ENCODE measurements at regions of chr20 and their contacts with region 1.

Region 1: DNA sequence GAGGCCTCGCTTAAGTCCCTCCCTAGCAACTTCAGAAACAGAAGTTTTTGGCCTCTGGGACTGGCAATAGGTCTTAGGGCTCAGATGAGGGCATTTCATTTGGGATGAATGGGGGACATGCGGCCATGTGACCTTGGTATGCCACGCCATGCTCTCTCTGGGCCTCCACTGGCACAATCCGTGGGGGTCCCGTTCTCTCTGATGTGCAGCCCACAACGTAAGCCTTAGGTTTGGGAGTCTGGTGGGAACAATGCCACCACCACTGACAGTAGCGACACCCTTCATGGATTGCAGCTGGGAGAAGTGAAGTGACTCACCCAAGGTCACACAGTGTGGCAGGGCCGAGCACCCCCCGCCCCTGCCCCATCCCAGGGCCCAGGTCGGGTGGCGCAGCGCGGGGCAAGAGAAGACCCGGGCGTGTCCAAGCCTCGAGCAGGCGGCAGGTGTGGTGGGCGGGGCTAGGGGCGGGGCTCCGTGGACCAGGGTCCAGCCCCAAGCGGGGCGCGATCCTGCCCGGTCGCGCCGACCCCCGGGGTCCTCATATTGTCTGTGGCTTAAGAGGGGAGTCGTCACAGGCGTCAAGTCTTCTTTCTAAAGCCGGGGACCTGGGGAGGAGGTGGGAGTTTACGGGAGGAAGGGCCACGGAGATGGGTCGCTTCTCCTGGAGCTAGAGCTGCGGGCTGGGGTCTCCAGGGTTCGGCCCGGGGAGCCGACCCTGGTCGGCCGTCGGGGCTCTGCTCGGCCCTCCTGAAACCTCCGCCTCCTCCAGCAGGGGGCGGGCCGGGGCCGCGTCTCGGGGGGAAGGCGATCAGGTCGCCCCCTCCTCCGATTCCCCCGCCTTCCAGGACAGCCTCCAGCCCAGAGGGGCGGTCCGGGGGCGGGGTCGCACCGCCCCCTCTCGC is 698 bp upstream of the CEBPB start:
- DNase-seq: peak; percentile 90
- H3K4me3 Mint-ChIP-seq: peak overlapping the region; percentile 29
- H3K27ac Mint-ChIP-seq: no peak overlapping the region
- H3K4me1 Mint-ChIP-seq: peaks cover 15% of the 10 kb centered on the region
- H3K27me3 Mint-ChIP-seq: peaks cover 9% of the 10 kb centered on the region

Region 2: GRCh38 chr20:50153485-50154377 is 36.2 kb before region 1 on chr20 and contains the start of gene PEDS1:
- CTCF ChIA-PET with region 1: no interaction called
- intact Hi-C with region 1: no loop called
- DNase-seq: peak; percentile 87
- H3K4me3 Mint-ChIP-seq: peak within 1 kb of the TSS; percentile 75
- H3K27ac Mint-ChIP-seq: peak within 1 kb of the TSS; percentile 84
- H3K4me1 Mint-ChIP-seq: peaks cover 39% of the 10 kb centered on the region
- H3K27me3 Mint-ChIP-seq: no peaks in the 10 kb centered on the region
- total RNA-seq, gene PEDS1: 10.4 to 11.2 TPM

Region 3: DNA sequence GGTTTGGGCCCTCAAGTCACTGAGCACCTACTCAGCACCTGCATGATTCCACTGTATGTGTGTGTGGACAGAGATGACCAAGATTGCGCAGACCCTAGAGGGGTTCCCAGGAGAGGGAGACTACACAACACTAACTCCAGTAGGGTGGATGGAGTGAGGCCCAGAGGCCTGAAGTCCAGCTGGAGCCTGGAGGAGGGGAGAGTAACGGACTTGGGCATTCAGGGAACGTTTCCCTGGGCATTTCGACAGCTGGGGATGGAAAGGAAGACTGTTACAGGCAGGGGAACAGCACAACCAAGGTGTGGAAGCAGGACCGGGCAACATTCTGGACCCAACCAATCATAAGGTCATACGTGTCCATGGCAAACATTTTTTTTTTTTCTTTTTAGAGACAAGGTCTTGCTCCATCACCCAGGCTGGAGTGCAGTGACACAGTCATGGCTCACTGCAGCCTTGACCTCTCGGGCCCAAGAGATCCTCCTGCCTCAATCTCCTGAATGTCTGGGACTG is 10.4 kb before region 1 on chr20:
- CTCF ChIA-PET with region 1: interaction called, 15 read pairs
- intact Hi-C with region 1: no loop called
- DNase-seq: no peak
- H3K4me3 Mint-ChIP-seq: no peak overlapping the region
- H3K27ac Mint-ChIP-seq: no peak overlapping the region
- H3K4me1 Mint-ChIP-seq: no peaks in the 10 kb centered on the region
- H3K27me3 Mint-ChIP-seq: peaks cover 9% of the 10 kb centered on the region

Region 4: GRCh38 chr20:50338479-50339391 is 148.8 kb after region 1 on chr20:
- CTCF ChIA-PET with region 1: interaction called, 3 read pairs
- intact Hi-C with region 1: loop called (anchors 1 kb)
- DNase-seq: peak; percentile 88
- H3K4me3 Mint-ChIP-seq: peak overlapping the region; percentile 53
- H3K27ac Mint-ChIP-seq: peak overlapping the region; percentile 92
- H3K4me1 Mint-ChIP-seq: peaks cover 36% of the 10 kb centered on the region
- H3K27me3 Mint-ChIP-seq: no peaks in the 10 kb centered on the region

Region 5: DNA sequence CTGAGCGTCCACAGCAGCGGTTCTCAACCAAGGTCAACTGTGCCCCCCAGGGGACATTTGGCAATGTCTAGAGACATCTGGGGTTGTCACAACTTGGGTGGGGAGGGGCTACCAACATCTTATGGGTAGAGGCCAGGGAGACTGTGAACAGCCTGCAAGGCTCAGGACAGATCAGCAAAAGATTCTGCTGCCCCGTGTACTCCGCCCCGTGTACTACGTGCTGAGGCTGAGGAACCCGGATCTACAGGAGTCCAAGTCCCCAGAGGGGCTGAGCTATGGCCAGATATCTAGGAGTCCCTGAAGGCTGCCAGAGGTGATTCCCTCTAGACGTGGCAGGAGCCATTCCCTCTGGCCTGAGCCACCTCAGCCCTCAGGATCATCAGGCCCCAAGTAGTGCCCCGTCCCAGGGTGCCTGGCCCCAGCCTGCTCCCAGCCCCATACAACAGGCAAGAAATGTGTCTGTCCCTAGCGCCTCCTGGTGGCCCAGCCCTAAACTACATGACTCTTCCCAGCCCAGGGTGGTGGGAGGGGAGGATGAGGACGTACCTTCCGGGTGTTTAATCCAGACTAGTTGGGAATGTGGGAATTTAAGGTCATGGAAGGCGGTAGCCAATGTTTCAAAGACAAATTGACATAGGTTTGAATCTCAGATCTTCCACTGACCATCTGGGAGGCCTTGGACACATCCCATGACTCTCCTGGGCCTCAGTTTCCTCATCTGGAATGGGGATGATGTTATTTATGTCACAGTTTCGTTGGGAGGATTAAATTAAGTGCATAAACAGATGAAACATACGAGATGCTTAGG is 270.7 kb after region 1 on chr20:
- CTCF ChIA-PET with region 1: interaction called, 171 read pairs
- intact Hi-C with region 1: loop called (anchors 1 kb)
- DNase-seq: peak; percentile 90
- H3K4me3 Mint-ChIP-seq: no peak overlapping the region
- H3K27ac Mint-ChIP-seq: no peak overlapping the region
- H3K4me1 Mint-ChIP-seq: peaks cover 9% of the 10 kb centered on the region
- H3K27me3 Mint-ChIP-seq: peaks cover 4% of the 10 kb centered on the region

Region 6: DNA sequence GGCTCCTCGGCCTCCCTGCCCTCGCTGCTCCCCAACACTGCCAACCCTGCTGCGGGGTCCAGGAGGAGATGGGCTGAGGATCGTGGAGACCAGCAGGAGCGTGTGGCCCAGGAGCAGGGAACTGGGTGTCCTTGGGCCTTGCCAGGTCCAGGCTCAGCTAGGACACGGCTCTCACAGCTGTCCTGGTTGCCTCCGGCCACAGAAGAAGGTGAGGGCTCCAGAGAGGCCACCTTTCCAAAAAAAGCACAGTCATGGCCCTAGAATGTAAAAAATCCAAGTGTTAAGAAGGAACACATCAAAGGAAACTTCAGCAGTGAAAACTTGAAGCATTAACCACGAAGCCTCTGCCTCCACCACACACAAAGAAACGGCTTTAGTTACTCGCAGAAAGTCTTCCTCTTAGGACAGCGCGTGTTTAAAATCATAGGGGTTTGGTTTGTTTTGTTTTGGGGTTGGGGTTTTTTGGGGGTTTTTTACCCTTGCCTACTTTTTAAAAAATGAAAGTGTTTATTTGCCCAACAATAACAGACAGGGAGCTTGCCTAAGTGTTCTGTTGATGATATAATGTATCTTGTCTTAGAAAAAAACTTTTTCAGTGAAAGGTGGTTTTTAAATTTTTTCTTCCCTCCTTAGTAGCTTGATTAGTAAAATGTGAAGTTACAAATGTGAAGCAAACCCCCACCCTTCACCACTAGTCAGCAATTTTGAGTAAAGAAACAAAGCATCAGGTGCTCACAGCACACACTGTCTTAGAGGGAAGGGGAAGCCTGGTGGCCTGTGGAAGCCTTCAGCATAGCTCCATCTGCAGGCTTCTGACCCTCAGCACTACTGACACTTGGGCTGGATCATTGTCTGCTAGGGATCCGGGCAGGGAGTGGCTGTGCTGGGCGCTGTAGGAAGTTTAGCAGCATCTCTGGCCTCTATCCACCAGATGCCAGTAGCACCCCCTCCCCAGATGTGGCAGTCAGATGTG is 380.2 kb after region 1 on chr20:
- CTCF ChIA-PET with region 1: interaction called, 4 read pairs
- intact Hi-C with region 1: loop called (anchors 2 kb)
- DNase-seq: peak; percentile 83
- H3K4me3 Mint-ChIP-seq: peak overlapping the region; percentile 23
- H3K27ac Mint-ChIP-seq: peak overlapping the region; percentile 91
- H3K4me1 Mint-ChIP-seq: peaks cover 84% of the 10 kb centered on the region
- H3K27me3 Mint-ChIP-seq: no peaks in the 10 kb centered on the region

Region 7: GRCh38 chr20:50731055-50731871 is 541.3 kb after region 1 on chr20 and contains the start of gene PARD6B:
- CTCF ChIA-PET with region 1: no interaction called
- intact Hi-C with region 1: loop called (anchors 5 kb)
- DNase-seq: peak; percentile 100
- H3K4me3 Mint-ChIP-seq: peak within 1 kb of the TSS; percentile 86
- H3K27ac Mint-ChIP-seq: peak within 1 kb of the TSS; percentile 70
- H3K4me1 Mint-ChIP-seq: peaks cover 45% of the 10 kb centered on the region
- H3K27me3 Mint-ChIP-seq: no peaks in the 10 kb centered on the region
- total RNA-seq, gene PARD6B: 3.3 to 3.9 TPM